ENCODE measurements at regions of chr2 and their contacts with region 1.

Region 1: DNA sequence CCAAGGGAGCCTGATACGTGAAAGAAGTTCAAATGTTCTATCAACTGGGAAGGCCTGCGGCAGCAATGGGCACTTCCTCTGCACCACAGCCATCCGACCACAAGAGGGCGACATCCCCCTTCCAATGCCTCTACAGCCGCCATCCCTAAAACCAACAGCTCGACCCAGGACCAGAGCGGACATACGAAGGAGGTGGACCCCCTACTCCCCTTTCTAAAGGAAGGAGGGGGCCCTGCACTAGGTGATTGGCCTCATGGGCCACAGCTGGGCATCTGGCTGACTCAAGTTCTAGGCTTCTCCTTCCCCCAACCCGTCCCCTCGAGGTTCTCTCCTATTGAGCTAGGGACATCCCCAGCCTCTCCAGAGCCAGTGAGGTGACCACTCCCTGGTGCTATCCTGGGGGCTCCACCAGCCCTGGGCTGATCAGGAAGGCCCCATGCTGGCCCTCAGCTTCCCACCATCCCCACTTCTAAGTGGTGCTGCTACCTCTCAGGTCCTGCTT is 217.2 kb downstream of the TNS1 start:
- DNase-seq: peak; percentile 63 to 72
- ATAC-seq: peak; percentile 85 to 90
- H3K4me3 ChIP-seq: no peak overlapping the region
- H3K27ac ChIP-seq: no peak overlapping the region
- H3K4me1 ChIP-seq: peaks cover 3% of the 10 kb centered on the region; the same call in 1 of the 3 replicates
- CTCF ChIP-seq: peak; percentile 95
- EP300 ChIP-seq: no peak
- POLR2A ChIP-seq: no peak
- RAD21 ChIP-seq: peak; percentile 95 to 97

Region 2: DNA sequence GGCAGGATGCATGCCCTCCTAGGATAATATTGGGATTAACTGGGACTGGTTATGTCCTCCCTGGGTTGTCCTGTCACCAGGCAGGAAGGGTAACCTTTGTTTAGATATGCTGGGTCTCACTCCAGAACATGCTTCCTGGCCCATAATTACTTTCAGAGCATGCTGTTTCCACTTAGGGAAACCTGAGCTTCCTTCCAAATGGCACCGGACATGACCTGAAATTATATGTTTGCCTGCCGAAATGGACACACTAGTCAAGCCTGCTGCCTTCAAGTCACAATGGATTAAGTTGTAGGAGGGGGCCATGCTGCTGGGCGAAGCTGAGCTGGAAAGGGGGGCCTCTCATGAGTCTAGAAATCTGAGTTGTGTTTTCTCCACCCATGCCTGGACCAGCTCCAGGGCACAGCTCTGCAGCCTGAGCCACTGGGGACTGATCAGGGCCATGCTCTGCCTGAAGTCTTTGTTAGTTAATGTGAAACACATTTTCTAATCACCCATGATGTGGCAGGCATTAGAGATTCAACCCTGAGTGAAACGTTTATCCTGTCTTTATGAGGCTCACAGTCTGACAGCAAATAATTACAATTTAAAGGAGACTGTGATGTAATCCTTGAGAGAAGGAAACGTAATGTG is 56.1 kb before region 1 on chr2:
- CTCF ChIA-PET with region 1: no interaction called
- POLR2A ChIA-PET with region 1: no interaction called
- DNase-seq: no peak
- ATAC-seq: no peak
- H3K4me3 ChIP-seq: no peak overlapping the region
- H3K27ac ChIP-seq: no peak overlapping the region
- H3K4me1 ChIP-seq: no peaks in the 10 kb centered on the region
- CTCF ChIP-seq: no peak
- EP300 ChIP-seq: no peak
- POLR2A ChIP-seq: no peak
- RAD21 ChIP-seq: no peak

Region 3: DNA sequence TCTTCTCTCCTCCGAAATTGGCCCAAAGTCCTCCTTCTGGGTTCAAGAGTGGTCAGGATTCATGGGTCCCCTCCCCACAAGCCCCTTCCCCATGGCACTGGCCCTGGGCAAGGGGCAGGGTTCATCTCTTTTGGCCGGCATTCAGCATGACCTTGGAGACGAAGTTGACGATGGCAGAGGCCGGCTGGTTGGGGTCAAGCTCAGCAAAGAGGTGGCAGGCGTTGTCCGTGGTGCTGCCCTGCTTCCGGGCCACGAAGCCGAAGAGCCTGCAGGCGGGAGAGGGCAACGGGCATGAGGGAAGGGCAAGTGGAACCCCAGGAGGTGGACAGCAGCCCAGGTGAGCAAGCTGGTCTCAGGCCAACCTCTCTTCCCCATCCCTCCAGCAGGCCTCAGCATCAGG is 18.7 kb after region 1 on chr2:
- CTCF ChIA-PET with region 1: interaction called, 86 read pairs
- POLR2A ChIA-PET with region 1: no interaction called
- DNase-seq: no peak
- ATAC-seq: no peak
- H3K4me3 ChIP-seq: no peak overlapping the region
- H3K27ac ChIP-seq: no peak overlapping the region
- H3K4me1 ChIP-seq: no peaks in the 10 kb centered on the region
- CTCF ChIP-seq: no peak
- EP300 ChIP-seq: no peak
- POLR2A ChIP-seq: no peak
- RAD21 ChIP-seq: no peak

Region 4: GRCh38 chr2:217880287-217880889 is 94.8 kb after region 1 on chr2:
- CTCF ChIA-PET with region 1: interaction called, 112 read pairs
- POLR2A ChIA-PET with region 1: no interaction called
- DNase-seq: no peak
- ATAC-seq: peak in 1 of 2 experiments; percentile 24; a peak in 1 of 6 replicates
- H3K4me3 ChIP-seq: no peak overlapping the region
- H3K27ac ChIP-seq: no peak overlapping the region
- H3K4me1 ChIP-seq: no peaks in the 10 kb centered on the region
- CTCF ChIP-seq: no peak
- EP300 ChIP-seq: no peak
- POLR2A ChIP-seq: no peak
- RAD21 ChIP-seq: no peak

Region 5: GRCh38 chr2:217899231-217900009 is 113.8 kb after region 1 on chr2:
- CTCF ChIA-PET with region 1: interaction called, 15 read pairs
- POLR2A ChIA-PET with region 1: no interaction called
- DNase-seq: peak; percentile 77 to 86
- ATAC-seq: peak; percentile 63 to 81
- H3K4me3 ChIP-seq: no peak overlapping the region
- H3K27ac ChIP-seq: peak overlapping the region; percentile 86 to 89
- H3K4me1 ChIP-seq: peaks cover 56% of the 10 kb centered on the region
- CTCF ChIP-seq: peak; percentile 63
- EP300 ChIP-seq: no peak
- POLR2A ChIP-seq: no peak
- RAD21 ChIP-seq: peak; percentile 32 to 43; a peak in 4 of 5 replicates

Region 6: GRCh38 chr2:217988014-217988839 is 202.6 kb after region 1 on chr2:
- CTCF ChIA-PET with region 1: interaction called, 282 read pairs
- POLR2A ChIA-PET with region 1: no interaction called
- DNase-seq: peak; percentile 56 to 61
- ATAC-seq: peak; percentile 56 to 86; a peak in 5 of 6 replicates
- H3K4me3 ChIP-seq: no peak overlapping the region
- H3K27ac ChIP-seq: peak overlapping the region; percentile 55 to 71
- H3K4me1 ChIP-seq: peaks cover 24% of the 10 kb centered on the region
- CTCF ChIP-seq: peak; percentile 90
- EP300 ChIP-seq: no peak
- POLR2A ChIP-seq: no peak
- RAD21 ChIP-seq: peak; percentile 91 to 93

Region 7: DNA sequence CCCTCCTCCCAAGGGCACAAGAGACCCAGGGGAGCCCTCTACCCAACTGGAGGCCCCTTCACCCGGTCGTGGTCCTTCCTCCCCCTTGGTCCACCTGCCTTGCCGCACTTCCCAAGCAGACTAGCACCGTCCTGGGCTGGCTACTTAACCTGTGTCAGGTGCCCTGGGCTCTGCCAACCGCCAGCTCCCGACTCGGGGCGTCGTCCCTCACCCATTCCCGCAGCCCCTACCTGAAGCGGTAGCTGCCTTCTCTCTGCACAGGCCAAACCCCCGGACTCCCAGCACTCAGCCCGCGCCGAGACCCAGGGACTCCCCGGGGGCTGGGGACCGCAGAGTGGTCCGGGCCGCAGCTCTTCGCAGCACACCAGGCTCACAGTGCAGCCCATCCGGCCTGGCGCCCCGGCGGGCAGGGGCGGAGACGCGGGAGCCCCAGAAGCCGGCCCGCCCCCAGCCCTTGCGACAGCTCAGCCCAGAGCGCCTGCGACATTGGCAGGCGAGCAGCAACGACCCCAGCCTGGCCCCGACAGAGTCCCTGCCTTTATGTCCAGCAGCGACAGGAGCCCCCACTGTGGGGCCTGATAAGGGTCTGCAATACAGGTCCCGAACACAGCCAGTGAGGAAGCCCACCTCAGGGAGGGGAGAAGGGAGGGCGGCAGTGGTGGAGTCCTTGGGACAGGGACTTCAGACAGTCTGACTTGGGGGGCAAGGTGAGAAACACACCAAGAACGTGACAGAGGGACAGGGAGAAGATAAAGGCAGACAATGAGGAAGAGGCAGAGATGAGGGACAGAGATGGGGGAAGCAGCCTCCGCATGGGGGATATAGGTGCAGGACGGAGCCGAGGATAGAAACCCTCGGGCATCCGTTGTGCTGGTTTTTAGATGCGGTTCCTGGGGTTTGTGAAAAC is 248.2 kb after region 1 on chr2:
- CTCF ChIA-PET with region 1: interaction called, 122 read pairs
- POLR2A ChIA-PET with region 1: no interaction called
- DNase-seq: no peak
- ATAC-seq: peak in 1 of 2 experiments; percentile 17; a peak in 3 of 6 replicates
- H3K4me3 ChIP-seq: no peak overlapping the region
- H3K27ac ChIP-seq: peak overlapping the region; percentile 53 to 83; a peak in 5 of 6 replicates
- H3K4me1 ChIP-seq: peaks cover 4% of the 10 kb centered on the region; the same call in 1 of the 3 replicates
- CTCF ChIP-seq: no peak
- EP300 ChIP-seq: no peak
- POLR2A ChIP-seq: no peak
- RAD21 ChIP-seq: no peak

Measured in A549 (cell line).